Body of pancreas (tissue), 4 donors: ENCODE measurements at regions of chr1 and their contacts with region 1.

Region 1: GRCh38 chr1:12204140-12204539 is 25.7 kb upstream of the VPS13D start:
- DNase-seq: no peak
- ATAC-seq: no peak
- H3K4me3 ChIP-seq: no peak overlapping the region
- H3K27ac ChIP-seq: no peak overlapping the region
- H3K4me1 ChIP-seq: no peaks in the 10 kb centered on the region
- H3K27me3 ChIP-seq: no peaks in the 10 kb centered on the region
- CTCF ChIP-seq: no peak
- POLR2A ChIP-seq: no peak

Region 2: GRCh38 chr1:12121212-12122003 is 82.7 kb before region 1 on chr1:
- intact Hi-C with region 1: loop called (anchors 2 kb)
- DNase-seq: no peak
- ATAC-seq: no peak
- H3K4me3 ChIP-seq: no peak overlapping the region
- H3K27ac ChIP-seq: no peak overlapping the region
- H3K4me1 ChIP-seq: no peaks in the 10 kb centered on the region
- H3K27me3 ChIP-seq: peaks cover 0 to 6% of the 10 kb centered on the region in 2 donors
- CTCF ChIP-seq: no peak
- POLR2A ChIP-seq: no peak